ENCODE measurements at regions of chr7 and their contacts with region 1.

Region 1: DNA sequence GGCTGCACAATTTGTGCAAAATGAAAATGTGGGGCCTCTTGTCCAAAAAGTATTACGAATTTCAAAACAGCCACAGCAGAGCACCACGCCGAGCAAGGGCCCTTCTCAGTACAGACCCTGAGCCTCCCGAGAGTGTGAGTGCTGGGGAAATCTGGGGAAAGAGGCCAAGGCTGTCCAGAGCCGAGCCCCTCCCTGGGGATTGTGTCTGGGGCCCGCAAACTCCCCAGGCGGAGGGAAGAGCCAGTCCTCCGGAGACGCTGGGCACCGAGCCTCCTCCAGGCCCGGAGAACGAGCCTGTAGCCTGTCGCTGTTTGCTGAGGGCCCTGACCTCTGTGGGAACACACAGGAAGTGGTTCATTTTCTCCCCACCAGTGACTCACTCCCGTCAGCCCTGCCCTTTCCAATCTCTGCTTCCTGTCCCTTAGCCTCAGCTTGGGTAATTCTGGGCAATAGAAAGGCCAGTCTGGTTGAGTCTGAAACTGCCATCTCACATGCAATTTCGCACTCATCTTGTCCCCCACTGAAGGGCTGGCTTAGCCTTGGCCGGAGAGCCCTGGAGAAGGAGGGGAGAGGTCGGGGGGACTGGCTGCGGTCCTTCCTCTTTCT is 19.5 kb upstream of the GNA12 start:
- DNase-seq: peak; percentile 61 to 74
- ATAC-seq: peak; percentile 57 to 78
- H3K4me3 ChIP-seq: peak overlapping the region in 2 of 4 donors; percentile 16 to 21
- H3K27ac ChIP-seq: peak overlapping the region; percentile 68 to 83 (median 77)
- H3K4me1 ChIP-seq: peaks cover 11 to 19% of the 10 kb centered on the region in 2 donors
- H3K27me3 ChIP-seq: no peaks in the 10 kb centered on the region
- CTCF ChIP-seq: no peak
- POLR2A ChIP-seq: peak in 1 of 2 donors; percentile 41

Region 2: GRCh38 chr7:3154912-3155494 is 291.4 kb after region 1 on chr7:
- in situ Hi-C with region 1: no loop called
- intact Hi-C with region 1: loop called (anchors 10 kb)
- DNase-seq: no peak
- ATAC-seq: no peak
- H3K4me3 ChIP-seq: no peak overlapping the region
- H3K27ac ChIP-seq: no peak overlapping the region
- H3K4me1 ChIP-seq: no peaks in the 10 kb centered on the region
- H3K27me3 ChIP-seq: no peaks in the 10 kb centered on the region
- CTCF ChIP-seq: peak in 2 of 5 experiments; percentile 23 to 26
- POLR2A ChIP-seq: no peak

Measured in gastrocnemius medialis (tissue), 4 donors.